Activated CD4-positive, alpha-beta T cell treated with anti-CD3 and anti-CD28 coated beads, Interleukin-2, amount 10 ng/mL, durations not matched to agents 24 days and 14 days (primary cell): ENCODE measurements at regions of chr6 and their contacts with region 1.

Region 1: DNA sequence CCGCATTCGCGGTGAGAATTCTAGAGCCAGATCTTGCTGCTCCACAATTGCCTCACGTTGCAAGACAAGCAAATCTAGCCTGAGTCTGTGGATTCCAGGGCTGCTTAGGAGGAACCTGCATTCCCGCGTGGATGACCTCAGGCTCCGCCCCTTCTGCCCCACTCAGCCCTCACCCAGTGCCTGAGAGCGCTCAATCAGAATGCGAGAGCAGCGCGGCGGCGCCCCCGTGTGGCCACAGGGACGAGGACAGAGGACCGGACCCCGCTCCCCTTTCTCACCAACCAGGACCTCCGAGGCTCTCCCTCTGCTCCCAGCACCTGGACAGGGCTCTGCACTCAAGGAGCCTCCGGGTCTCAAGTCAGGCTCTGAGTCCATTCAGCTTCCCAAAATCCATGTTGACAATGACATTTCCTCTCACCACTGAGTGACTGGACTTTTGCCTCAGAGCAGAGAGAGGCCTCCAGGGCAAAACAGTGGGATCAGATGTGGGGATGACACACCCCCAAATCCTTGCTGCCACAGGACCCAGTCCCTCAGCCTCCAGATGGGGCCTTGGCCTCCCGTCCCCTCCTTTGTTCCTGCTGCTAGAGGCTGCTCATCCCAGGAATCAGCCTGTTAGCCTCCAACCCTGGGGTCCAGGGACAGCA is 52.0 kb downstream of the RPP21 start:
- DNase-seq: peak; percentile 96
- H3K4me3 Mint-ChIP-seq: no peak overlapping the region
- H3K27ac Mint-ChIP-seq: no peak overlapping the region
- H3K4me1 Mint-ChIP-seq: peaks cover 2% of the 10 kb centered on the region
- H3K27me3 Mint-ChIP-seq: peaks cover 42% of the 10 kb centered on the region

Region 2: GRCh38 chr6:30219244-30219643 is 177.7 kb before region 1 on chr6:
- intact Hi-C with region 1: loop called (anchors 1 kb)
- DNase-seq: peak; percentile 89
- H3K4me3 Mint-ChIP-seq: no peak overlapping the region
- H3K27ac Mint-ChIP-seq: no peak overlapping the region
- H3K4me1 Mint-ChIP-seq: peaks cover 18% of the 10 kb centered on the region
- H3K27me3 Mint-ChIP-seq: peaks cover 6% of the 10 kb centered on the region

Region 3: GRCh38 chr6:30238174-30238795 is 158.7 kb before region 1 on chr6:
- intact Hi-C with region 1: loop called (anchors 1 kb)
- DNase-seq: peak; percentile 74
- H3K4me3 Mint-ChIP-seq: no peak overlapping the region
- H3K27ac Mint-ChIP-seq: no peak overlapping the region
- H3K4me1 Mint-ChIP-seq: no peaks in the 10 kb centered on the region
- H3K27me3 Mint-ChIP-seq: peaks cover 40% of the 10 kb centered on the region

Region 4: DNA sequence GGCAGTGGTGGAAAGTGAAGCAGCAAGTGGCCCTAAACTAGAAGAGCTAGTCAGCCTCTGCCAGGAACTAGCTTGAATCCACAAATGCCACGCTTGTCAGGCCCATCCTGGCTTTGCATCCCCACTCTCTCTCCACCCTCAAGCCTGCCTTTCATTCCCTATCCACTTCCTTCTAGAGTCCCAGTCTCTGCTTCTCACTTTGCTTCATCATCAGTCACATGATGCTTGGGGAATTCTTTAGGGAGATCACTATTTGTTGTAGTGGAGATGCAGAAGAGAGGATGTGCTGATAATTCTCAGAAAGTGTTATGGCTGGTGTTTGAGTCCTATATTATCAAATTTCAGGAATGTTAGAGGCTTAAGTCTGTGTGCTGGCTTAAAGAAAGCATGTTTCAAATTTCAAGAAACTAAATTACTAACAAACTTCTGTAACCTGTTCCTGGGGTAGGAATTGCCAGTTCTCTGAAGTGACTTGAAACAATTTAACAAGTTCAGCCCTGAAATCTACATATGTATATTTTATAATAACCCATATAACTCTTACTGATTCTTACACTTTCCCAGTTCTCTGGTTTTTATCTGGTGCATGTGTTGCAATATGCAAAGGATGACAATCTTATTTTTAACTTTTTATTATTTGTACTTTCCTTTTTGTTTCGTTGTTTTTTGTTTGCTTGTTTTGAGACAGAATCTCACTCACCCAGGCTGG is 62.7 kb before region 1 on chr6:
- intact Hi-C with region 1: no loop called
- DNase-seq: no peak
- H3K4me3 Mint-ChIP-seq: no peak overlapping the region
- H3K27ac Mint-ChIP-seq: no peak overlapping the region
- H3K4me1 Mint-ChIP-seq: no peaks in the 10 kb centered on the region
- H3K27me3 Mint-ChIP-seq: no peaks in the 10 kb centered on the region

Region 5: DNA sequence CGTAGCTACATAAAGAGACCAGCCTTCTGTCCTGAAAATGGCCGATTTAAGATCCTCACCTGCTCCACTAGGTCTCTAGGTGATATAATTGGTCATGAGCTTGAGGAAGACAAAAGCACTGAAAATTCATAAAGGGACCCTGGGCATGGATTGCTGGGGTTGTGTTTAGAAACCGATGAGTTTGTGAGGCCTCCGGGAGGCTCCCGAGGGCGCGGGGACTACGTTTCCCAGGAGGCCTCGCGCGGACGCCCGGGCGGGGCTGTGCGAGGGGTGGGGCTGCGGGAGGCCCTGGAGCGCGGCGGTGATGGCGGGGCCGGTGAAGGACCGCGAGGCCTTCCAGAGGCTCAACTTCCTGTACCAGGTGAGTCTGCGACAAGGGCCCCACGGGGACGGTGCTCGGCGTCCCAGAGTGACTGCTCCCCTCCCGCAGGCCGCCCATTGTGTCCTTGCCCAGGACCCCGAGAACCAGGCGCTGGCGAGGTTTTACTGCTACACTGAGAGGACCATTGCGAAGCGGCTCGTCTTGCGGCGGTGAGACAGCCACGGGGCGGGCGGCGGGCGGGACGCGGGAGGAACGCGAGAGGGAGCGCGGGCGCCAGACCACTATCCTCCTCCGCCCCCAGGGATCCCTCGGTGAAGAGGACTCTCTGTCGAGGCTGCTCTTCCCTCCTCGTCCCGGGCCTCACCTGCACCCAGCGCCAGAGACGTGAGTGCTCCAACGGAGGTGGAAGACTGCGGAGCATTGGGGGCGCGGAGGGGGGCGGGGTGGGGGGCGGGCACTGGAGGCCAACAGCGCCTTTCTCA is 51.9 kb before region 1 on chr6 and contains the start of gene RPP21:
- intact Hi-C with region 1: no loop called
- DNase-seq: peak; percentile 97
- H3K4me3 Mint-ChIP-seq: peak within 1 kb of the TSS; percentile 90
- H3K27ac Mint-ChIP-seq: peak within 1 kb of the TSS; percentile 89
- H3K4me1 Mint-ChIP-seq: peaks cover 17% of the 10 kb centered on the region
- H3K27me3 Mint-ChIP-seq: peaks cover 5% of the 10 kb centered on the region
- total RNA-seq, gene RPP21: 45.0 and 48.0 TPM in 2 replicates

Region 6: DNA sequence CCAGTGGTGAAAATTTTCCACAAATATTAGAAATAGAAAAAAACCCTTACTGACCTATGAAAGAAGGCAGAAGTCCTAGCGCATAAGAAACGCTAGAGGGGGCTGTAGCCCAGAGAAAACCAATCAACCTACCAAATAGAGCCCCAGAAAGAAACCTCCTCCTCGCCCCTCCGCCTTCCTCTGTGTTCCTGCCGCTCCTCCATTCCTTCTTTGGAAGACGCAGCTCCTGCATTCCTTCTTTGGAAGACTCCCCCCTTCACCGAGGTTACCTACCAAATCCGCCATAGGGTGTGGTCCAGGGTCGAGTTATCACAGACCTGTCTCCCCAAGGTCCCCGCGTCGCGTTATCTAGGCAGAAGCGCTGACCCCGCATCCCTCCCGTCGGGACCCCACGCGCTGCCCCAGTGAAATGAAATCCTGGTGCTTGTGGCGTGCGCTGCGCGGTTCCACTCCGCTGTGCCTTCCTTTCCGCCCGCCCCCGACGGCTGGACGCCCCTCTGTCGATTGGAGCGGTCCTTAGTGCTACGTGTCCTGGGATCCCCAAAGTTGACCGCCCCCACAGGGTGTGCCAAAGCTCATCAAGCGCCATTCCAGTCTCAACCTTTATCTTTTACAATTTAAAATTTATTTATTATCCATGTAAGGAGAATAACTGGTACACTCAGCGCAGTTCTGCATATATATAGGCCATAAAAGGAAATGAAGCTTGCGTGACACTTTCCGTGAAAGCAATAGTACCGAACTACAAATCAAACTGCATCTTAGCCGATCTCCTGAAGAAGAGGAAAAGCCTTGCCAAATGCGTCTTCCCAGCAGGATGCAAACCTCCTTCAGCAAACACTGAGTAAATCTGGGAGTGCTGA is 39.0 kb before region 1 on chr6:
- intact Hi-C with region 1: loop called (anchors 1 kb)
- DNase-seq: peak; percentile 84
- H3K4me3 Mint-ChIP-seq: peak overlapping the region; percentile 87
- H3K27ac Mint-ChIP-seq: no peak overlapping the region
- H3K4me1 Mint-ChIP-seq: peaks cover 7% of the 10 kb centered on the region
- H3K27me3 Mint-ChIP-seq: peaks cover 75% of the 10 kb centered on the region